HCT116 (cell line): ENCODE measurements at regions of chr16 and their contacts with region 1.

Region 1: GRCh38 chr16:86563489-86564345 is 2.9 kb upstream of the FOXC2 start:
- DNase-seq: peak; percentile 92
- ATAC-seq: peak; percentile 92
- H3K4me3 ChIP-seq: peak overlapping the region; percentile 40 to 43
- H3K27ac ChIP-seq: no peak overlapping the region
- H3K4me1 ChIP-seq: peaks cover 9 to 14% of the 10 kb centered on the region in 2 experiments
- H3K27me3 ChIP-seq: no peaks in the 10 kb centered on the region
- CTCF ChIP-seq: peak; percentile 100
- POLR2A ChIP-seq: no peak
- RAD21 ChIP-seq: peak; percentile 100

Region 2: GRCh38 chr16:86517652-86518258 is 46.0 kb before region 1 on chr16:
- CTCF ChIA-PET with region 1: no interaction called
- POLR2A ChIA-PET with region 1: no interaction called
- RAD21 ChIA-PET with region 1: no interaction called
- intact Hi-C with region 1: no loop called
- DNase-seq: peak; percentile 51
- ATAC-seq: peak; percentile 84
- H3K4me3 ChIP-seq: no peak overlapping the region
- H3K27ac ChIP-seq: no peak overlapping the region
- H3K4me1 ChIP-seq: peaks cover 4 to 13% of the 10 kb centered on the region in 2 experiments; a peak in 3 of 4 replicates
- H3K27me3 ChIP-seq: no peaks in the 10 kb centered on the region
- CTCF ChIP-seq: peak; percentile 91 to 98 (median 95)
- POLR2A ChIP-seq: no peak
- RAD21 ChIP-seq: peak; percentile 99

Region 3: DNA sequence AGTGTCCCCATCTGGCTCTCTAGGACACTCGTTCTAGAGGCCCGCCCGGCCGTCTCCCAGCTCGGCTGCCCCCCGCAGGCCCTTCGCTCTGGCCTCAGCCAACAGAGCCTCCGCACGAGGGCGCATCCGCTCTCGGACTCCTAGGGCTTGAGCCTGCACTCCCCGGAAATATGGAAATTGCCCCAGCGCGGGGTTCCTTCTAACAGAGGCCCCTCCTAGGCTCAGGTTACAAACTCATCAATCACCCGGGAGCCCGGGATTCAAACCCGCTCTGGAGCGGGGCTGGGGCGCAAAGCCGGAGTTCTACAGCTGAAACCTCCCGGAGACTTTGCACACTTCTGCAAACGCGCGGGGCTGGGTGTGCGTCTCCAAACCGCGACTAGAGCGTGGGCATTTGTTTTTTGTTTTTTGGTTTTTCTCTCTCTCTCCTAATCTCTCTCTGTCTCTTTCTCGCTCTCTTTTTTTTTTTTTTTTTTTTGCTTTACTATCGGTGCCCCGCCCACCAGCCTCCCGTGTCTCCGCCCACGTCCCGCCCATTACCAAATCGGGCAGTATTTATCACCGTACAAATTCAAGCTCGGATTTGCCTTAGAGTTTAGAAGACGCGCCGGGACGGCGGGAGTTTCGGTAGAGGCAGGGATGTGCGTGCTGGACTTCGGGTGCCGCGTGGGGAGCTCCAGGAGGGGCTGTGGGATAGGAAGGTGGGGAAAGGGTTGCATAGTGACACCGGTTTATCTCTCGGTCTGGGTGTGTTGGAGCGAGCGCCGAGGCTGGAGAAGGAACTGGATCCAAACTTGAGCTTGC is 12.2 kb after region 1 on chr16:
- CTCF ChIA-PET with region 1: interaction called, 13 read pairs
- POLR2A ChIA-PET with region 1: interaction called, 3 read pairs
- RAD21 ChIA-PET with region 1: interaction called, 4 read pairs
- intact Hi-C with region 1: no loop called
- DNase-seq: peak; percentile 97
- ATAC-seq: peak; percentile 95
- H3K4me3 ChIP-seq: peak overlapping the region; percentile 62 to 63
- H3K27ac ChIP-seq: peak overlapping the region; percentile 55
- H3K4me1 ChIP-seq: peaks cover 11 to 22% of the 10 kb centered on the region in 2 experiments; a peak in 3 of 4 replicates
- H3K27me3 ChIP-seq: no peaks in the 10 kb centered on the region
- CTCF ChIP-seq: peak; percentile 86 to 98 (median 88)
- POLR2A ChIP-seq: peak; percentile 60
- RAD21 ChIP-seq: peak; percentile 95

Region 4: GRCh38 chr16:86718118-86718517 is 154.4 kb after region 1 on chr16:
- CTCF ChIA-PET with region 1: no interaction called
- POLR2A ChIA-PET with region 1: no interaction called
- RAD21 ChIA-PET with region 1: no interaction called
- intact Hi-C with region 1: no loop called
- DNase-seq: no peak
- ATAC-seq: no peak
- H3K4me3 ChIP-seq: no peak overlapping the region
- H3K27ac ChIP-seq: no peak overlapping the region
- H3K4me1 ChIP-seq: no peaks in the 10 kb centered on the region; a peak in 1 of 4 replicates
- H3K27me3 ChIP-seq: peaks cover 21% of the 10 kb centered on the region; the same call in 1 of the 2 replicates
- CTCF ChIP-seq: no peak
- POLR2A ChIP-seq: no peak
- RAD21 ChIP-seq: no peak

Region 5: GRCh38 chr16:86732621-86733295 is 169.0 kb after region 1 on chr16:
- CTCF ChIA-PET with region 1: no interaction called
- POLR2A ChIA-PET with region 1: no interaction called
- RAD21 ChIA-PET with region 1: no interaction called
- intact Hi-C with region 1: no loop called
- DNase-seq: no peak
- ATAC-seq: no peak
- H3K4me3 ChIP-seq: no peak overlapping the region
- H3K27ac ChIP-seq: no peak overlapping the region
- H3K4me1 ChIP-seq: no peaks in the 10 kb centered on the region
- H3K27me3 ChIP-seq: peaks cover 53% of the 10 kb centered on the region
- CTCF ChIP-seq: no peak
- POLR2A ChIP-seq: no peak
- RAD21 ChIP-seq: no peak

Region 6: GRCh38 chr16:86874141-86874540 is 310.4 kb after region 1 on chr16:
- CTCF ChIA-PET with region 1: interaction called, 51 read pairs
- POLR2A ChIA-PET with region 1: no interaction called
- RAD21 ChIA-PET with region 1: interaction called, 8 to 11 read pairs
- intact Hi-C with region 1: loop called (anchors 1 kb)
- DNase-seq: peak; percentile 6
- ATAC-seq: peak; percentile 89
- H3K4me3 ChIP-seq: no peak overlapping the region
- H3K27ac ChIP-seq: no peak overlapping the region
- H3K4me1 ChIP-seq: no peaks in the 10 kb centered on the region
- H3K27me3 ChIP-seq: peaks cover 34% of the 10 kb centered on the region; the same call in 1 of the 2 replicates
- CTCF ChIP-seq: peak; percentile 80 to 96 (median 89)
- POLR2A ChIP-seq: no peak
- RAD21 ChIP-seq: peak; percentile 77

Region 7: GRCh38 chr16:87076950-87077749 is 513.4 kb after region 1 on chr16:
- CTCF ChIA-PET with region 1: interaction called, 20 read pairs
- POLR2A ChIA-PET with region 1: no interaction called
- RAD21 ChIA-PET with region 1: interaction called, 3 to 4 read pairs
- intact Hi-C with region 1: loop called (anchors 1 kb)
- DNase-seq: peak; percentile 94
- ATAC-seq: peak; percentile 97
- H3K4me3 ChIP-seq: peak overlapping the region; percentile 27 to 42
- H3K27ac ChIP-seq: peak overlapping the region; percentile 40
- H3K4me1 ChIP-seq: peaks cover 7 to 14% of the 10 kb centered on the region in 2 experiments; a peak in 3 of 4 replicates
- H3K27me3 ChIP-seq: no peaks in the 10 kb centered on the region
- CTCF ChIP-seq: peak; percentile 86 to 100 (median 99)
- POLR2A ChIP-seq: no peak
- RAD21 ChIP-seq: peak; percentile 91

Region 8: GRCh38 chr16:87203060-87203656 is 639.4 kb after region 1 on chr16:
- CTCF ChIA-PET with region 1: interaction called, 10 read pairs
- POLR2A ChIA-PET with region 1: no interaction called
- RAD21 ChIA-PET with region 1: no interaction called
- intact Hi-C with region 1: loop called (anchors 5 kb)
- DNase-seq: peak; percentile 85
- ATAC-seq: peak; percentile 99
- H3K4me3 ChIP-seq: peak overlapping the region in 1 of 2 experiments; percentile 1; a peak in 1 of 4 replicates
- H3K27ac ChIP-seq: no peak overlapping the region
- H3K4me1 ChIP-seq: peaks cover 2 to 27% of the 10 kb centered on the region in 2 experiments; a peak in 3 of 4 replicates
- H3K27me3 ChIP-seq: no peaks in the 10 kb centered on the region
- CTCF ChIP-seq: peak; percentile 96 to 100 (median 100)
- POLR2A ChIP-seq: no peak
- RAD21 ChIP-seq: peak; percentile 88

Region 9: DNA sequence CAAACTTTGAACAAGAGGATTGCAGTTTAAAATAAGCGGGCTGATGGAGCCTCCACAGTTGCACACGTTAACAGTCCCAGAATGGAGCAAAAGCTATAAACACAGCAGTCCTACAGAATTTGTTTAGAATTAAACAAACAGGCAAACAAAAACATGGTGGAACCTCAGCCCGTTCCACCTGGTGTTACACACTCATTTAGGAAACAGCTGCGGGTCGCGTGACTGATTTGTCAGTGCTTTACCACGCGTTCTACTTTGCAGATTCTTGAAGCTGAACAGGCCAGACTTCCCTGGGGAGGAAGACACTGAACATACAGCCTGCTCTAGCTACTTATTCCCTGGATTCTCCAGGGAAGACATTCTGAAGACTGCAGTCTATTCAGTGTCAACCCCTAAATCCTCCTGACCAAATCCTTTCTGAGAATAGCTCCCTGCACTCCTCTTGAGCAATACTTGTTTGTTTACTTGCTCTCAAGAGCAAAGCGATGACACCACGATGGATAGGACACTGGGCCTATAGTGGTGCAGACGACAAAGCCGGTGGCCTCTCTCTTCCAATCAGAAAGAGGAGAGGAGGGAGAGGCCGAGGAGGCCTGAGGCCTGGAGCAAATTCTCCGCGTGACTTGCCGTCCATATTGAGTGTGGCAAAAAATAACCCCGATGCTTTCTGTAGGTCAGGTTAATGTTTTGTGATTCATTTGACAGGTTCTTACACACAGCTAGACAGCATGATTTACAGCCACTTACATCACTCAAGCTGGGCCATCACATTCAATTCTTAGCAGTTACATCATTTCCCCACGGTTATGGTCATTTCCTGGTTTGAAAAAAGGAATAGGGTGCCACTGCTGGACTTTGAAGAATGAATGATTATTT is 824.5 kb after region 1 on chr16:
- CTCF ChIA-PET with region 1: no interaction called
- POLR2A ChIA-PET with region 1: no interaction called
- RAD21 ChIA-PET with region 1: no interaction called
- intact Hi-C with region 1: loop called (anchors 5 kb)
- DNase-seq: peak; percentile 100
- ATAC-seq: peak; percentile 67
- H3K4me3 ChIP-seq: no peak overlapping the region; a peak in 1 of 4 replicates
- H3K27ac ChIP-seq: peak overlapping the region; percentile 47
- H3K4me1 ChIP-seq: peaks cover 37 to 52% of the 10 kb centered on the region in 2 experiments
- H3K27me3 ChIP-seq: no peaks in the 10 kb centered on the region
- CTCF ChIP-seq: no peak
- POLR2A ChIP-seq: no peak
- RAD21 ChIP-seq: no peak